Transverse colon (tissue), 4 donors: ENCODE measurements at regions of chr15 and their contacts with region 1.

Region 1: GRCh38 chr15:81410318-81410753 is 36.3 kb upstream of the TMC3 start:
- DNase-seq: no peak
- H3K4me3 ChIP-seq: no peak overlapping the region
- H3K27ac ChIP-seq: no peak overlapping the region
- H3K4me1 ChIP-seq: peaks cover 0 to 8% (median 0%) of the 10 kb centered on the region in 4 donors
- H3K27me3 ChIP-seq: peaks cover 12% of the 10 kb centered on the region
- CTCF ChIP-seq: peak; percentile 31 to 59 (median 46)
- EP300 ChIP-seq: no peak
- POLR2A ChIP-seq: no peak

Region 2: GRCh38 chr15:81106560-81106959 is 303.8 kb before region 1 on chr15:
- in situ Hi-C with region 1: loop called in 1 of 4 experiments (anchors 25 kb)
- intact Hi-C with region 1: no loop called
- DNase-seq: peak; percentile 37
- H3K4me3 ChIP-seq: no peak overlapping the region
- H3K27ac ChIP-seq: no peak overlapping the region
- H3K4me1 ChIP-seq: no peaks in the 10 kb centered on the region
- H3K27me3 ChIP-seq: no peaks in the 10 kb centered on the region
- CTCF ChIP-seq: peak; percentile 64 to 68 (median 65)
- EP300 ChIP-seq: no peak
- POLR2A ChIP-seq: no peak

Region 3: GRCh38 chr15:81612630-81613029 is 202.3 kb after region 1 on chr15:
- in situ Hi-C with region 1: no loop called
- intact Hi-C with region 1: no loop called
- DNase-seq: no peak
- H3K4me3 ChIP-seq: no peak overlapping the region
- H3K27ac ChIP-seq: no peak overlapping the region
- H3K4me1 ChIP-seq: no peaks in the 10 kb centered on the region
- H3K27me3 ChIP-seq: no peaks in the 10 kb centered on the region
- CTCF ChIP-seq: no peak
- EP300 ChIP-seq: no peak
- POLR2A ChIP-seq: no peak